ENCODE measurements at regions of chr1 and their contacts with region 1.

Region 1: GRCh38 chr1:211281320-211282022 is 22.3 kb downstream of the RCOR3 start:
- DNase-seq: peak; percentile 24
- ATAC-seq: peak; percentile 47
- H3K4me3 Mint-ChIP-seq: no peak overlapping the region
- H3K27ac Mint-ChIP-seq: no peak overlapping the region
- H3K4me1 Mint-ChIP-seq: peaks cover 3% of the 10 kb centered on the region
- H3K27me3 Mint-ChIP-seq: no peaks in the 10 kb centered on the region

Region 2: GRCh38 chr1:211037095-211037494 is 244.4 kb before region 1 on chr1:
- CTCF ChIA-PET with region 1: no interaction called
- POLR2A ChIA-PET with region 1: no interaction called
- intact Hi-C with region 1: no loop called
- DNase-seq: peak; percentile 43
- ATAC-seq: peak; percentile 80
- H3K4me3 Mint-ChIP-seq: no peak overlapping the region
- H3K27ac Mint-ChIP-seq: no peak overlapping the region
- H3K4me1 Mint-ChIP-seq: no peaks in the 10 kb centered on the region
- H3K27me3 Mint-ChIP-seq: peaks cover 12% of the 10 kb centered on the region

Region 3: GRCh38 chr1:211247921-211248320 is 33.5 kb before region 1 on chr1:
- CTCF ChIA-PET with region 1: no interaction called
- POLR2A ChIA-PET with region 1: no interaction called
- intact Hi-C with region 1: no loop called
- DNase-seq: no peak
- ATAC-seq: no peak
- H3K4me3 Mint-ChIP-seq: no peak overlapping the region
- H3K27ac Mint-ChIP-seq: no peak overlapping the region
- H3K4me1 Mint-ChIP-seq: peaks cover 5% of the 10 kb centered on the region
- H3K27me3 Mint-ChIP-seq: no peaks in the 10 kb centered on the region

Region 4: DNA sequence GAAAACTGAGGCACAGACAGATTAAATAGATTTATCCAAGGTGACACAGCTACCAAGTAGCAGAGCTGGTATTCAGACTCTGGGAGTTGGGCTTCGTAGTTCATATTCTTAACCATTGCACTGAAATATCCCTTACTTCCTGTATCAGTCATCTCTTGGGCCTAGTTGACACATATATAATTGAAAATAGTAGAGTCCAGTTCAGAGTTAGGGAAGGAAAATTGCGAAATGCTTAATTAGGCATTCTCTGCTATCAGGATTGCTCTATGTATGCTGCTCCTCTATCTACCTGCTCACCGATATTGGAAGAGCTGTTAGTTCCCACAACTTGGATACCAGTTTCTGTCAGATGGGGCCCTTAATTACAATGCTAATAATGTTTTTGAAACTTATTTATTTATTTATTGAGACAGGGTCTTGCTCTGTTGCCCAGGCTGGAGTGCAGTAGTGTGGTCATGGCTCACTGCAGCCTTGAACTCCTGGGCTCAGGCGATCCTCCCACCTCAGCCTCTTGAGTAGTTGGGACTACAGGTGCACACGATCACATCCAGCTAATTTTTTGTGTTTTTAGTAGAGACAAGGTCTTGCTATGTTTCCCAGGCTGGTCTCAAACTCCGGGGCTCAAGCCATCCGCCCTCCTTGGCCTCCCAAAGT is 14.1 kb before region 1 on chr1:
- CTCF ChIA-PET with region 1: interaction called, 10 read pairs
- POLR2A ChIA-PET with region 1: interaction called, 15 read pairs
- intact Hi-C with region 1: no loop called
- DNase-seq: no peak
- ATAC-seq: no peak
- H3K4me3 Mint-ChIP-seq: no peak overlapping the region
- H3K27ac Mint-ChIP-seq: no peak overlapping the region
- H3K4me1 Mint-ChIP-seq: peaks cover 12% of the 10 kb centered on the region
- H3K27me3 Mint-ChIP-seq: no peaks in the 10 kb centered on the region

Region 5: GRCh38 chr1:211305044-211305443 is 23.6 kb after region 1 on chr1:
- CTCF ChIA-PET with region 1: interaction called, 5 read pairs
- POLR2A ChIA-PET with region 1: interaction called, 5 read pairs
- intact Hi-C with region 1: loop called in 1 of 2 experiments (anchors 1 kb)
- DNase-seq: peak; percentile 76
- ATAC-seq: peak; percentile 100
- H3K4me3 Mint-ChIP-seq: no peak overlapping the region
- H3K27ac Mint-ChIP-seq: peak overlapping the region; percentile 74
- H3K4me1 Mint-ChIP-seq: peaks cover 38% of the 10 kb centered on the region
- H3K27me3 Mint-ChIP-seq: no peaks in the 10 kb centered on the region